GM23248 (cell line): ENCODE measurements at regions of chr13 and their contacts with region 1.

Region 1: GRCh38 chr13:94362411-94362909 is 117.0 kb downstream of the DCT start:
- DNase-seq: peak; percentile 95
- H3K4me3 ChIP-seq: no peak overlapping the region
- H3K27ac ChIP-seq: no peak overlapping the region
- H3K4me1 ChIP-seq: no peaks in the 10 kb centered on the region
- H3K27me3 ChIP-seq: no peaks in the 10 kb centered on the region

Region 2: GRCh38 chr13:92967923-92968322 is 1394.5 kb before region 1 on chr13:
- in situ Hi-C with region 1: loop called (anchors 25 kb)
- DNase-seq: peak; percentile 48
- H3K4me3 ChIP-seq: no peak overlapping the region
- H3K27ac ChIP-seq: no peak overlapping the region
- H3K4me1 ChIP-seq: no peaks in the 10 kb centered on the region
- H3K27me3 ChIP-seq: peaks cover 10% of the 10 kb centered on the region; the same call in 1 of the 2 replicates

Region 3: GRCh38 chr13:93227878-93228642 is 1134.4 kb before region 1 on chr13:
- in situ Hi-C with region 1: loop called (anchors 25 kb)
- DNase-seq: peak; percentile 90
- H3K4me3 ChIP-seq: peak overlapping the region; percentile 83
- H3K27ac ChIP-seq: peak overlapping the region; percentile 73
- H3K4me1 ChIP-seq: peaks cover 34% of the 10 kb centered on the region
- H3K27me3 ChIP-seq: no peaks in the 10 kb centered on the region